ENCODE measurements at regions of chr20 and their contacts with region 1.

Region 1: GRCh38 chr20:53570521-53571357 is 22.9 kb downstream of the ZNF217 start:
- DNase-seq: no peak
- ATAC-seq: peak in 5 of 8 donors; percentile 39 to 85 (median 62)
- H3K4me3 ChIP-seq: no peak overlapping the region
- H3K27ac ChIP-seq: no peak overlapping the region
- H3K4me1 ChIP-seq: peaks cover 0 to 33% (median 6%) of the 10 kb centered on the region in 9 donors
- H3K27me3 ChIP-seq: no peaks in the 10 kb centered on the region
- CTCF ChIP-seq: no peak

Region 2: DNA sequence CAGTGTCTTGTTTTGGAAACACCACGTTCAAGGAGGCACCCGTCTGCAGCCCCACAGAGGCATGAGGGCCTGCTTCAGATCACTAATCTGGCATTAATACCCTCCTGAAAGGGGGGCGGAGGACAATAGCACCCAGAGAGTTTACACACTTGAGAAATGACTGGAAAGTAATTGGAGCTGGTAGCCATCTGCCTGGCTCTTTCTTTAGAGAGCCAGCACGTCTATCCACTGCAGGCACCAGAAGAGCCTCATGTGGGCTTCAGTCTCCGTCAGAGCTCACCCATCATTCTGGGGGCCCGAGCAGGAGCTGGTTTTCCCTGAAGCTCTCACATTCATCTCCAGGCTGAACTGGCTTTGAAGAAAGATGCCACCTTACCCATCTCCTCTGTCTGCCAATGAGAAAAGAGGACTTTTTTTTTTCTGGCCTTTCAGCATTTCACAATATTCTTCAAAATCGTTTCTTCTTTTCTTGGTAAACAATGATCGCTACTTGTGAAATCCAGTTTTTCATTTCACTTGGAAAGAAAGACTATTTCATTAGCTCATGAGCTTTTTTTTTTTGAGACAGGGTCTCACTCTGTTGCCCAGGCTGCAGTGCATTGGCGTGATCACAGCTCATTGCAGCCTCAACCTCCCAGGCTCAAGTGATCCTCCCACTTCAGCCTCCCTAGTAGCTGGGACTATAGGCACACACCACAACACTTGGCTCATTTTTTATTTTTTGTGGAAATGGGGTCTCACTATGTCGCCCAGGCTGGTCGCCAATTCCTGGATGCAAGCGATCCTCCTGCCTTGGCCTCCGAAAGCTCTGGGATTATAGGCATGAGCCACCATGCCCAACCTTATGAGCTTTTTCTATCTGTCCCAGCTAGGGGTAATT is 147.6 kb after region 1 on chr20:
- intact Hi-C with region 1: no loop called
- DNase-seq: no peak
- ATAC-seq: no peak
- H3K4me3 ChIP-seq: no peak overlapping the region
- H3K27ac ChIP-seq: peak overlapping the region in 1 of 10 donors; percentile 18
- H3K4me1 ChIP-seq: peaks cover 0 to 26% (median 0%) of the 10 kb centered on the region in 9 donors
- H3K27me3 ChIP-seq: no peaks in the 10 kb centered on the region
- CTCF ChIP-seq: no peak

Region 3: GRCh38 chr20:54062812-54063280 is 492.1 kb after region 1 on chr20:
- intact Hi-C with region 1: loop called in 8 of 10 experiments (anchors 5 to 10 kb)
- DNase-seq: no peak
- ATAC-seq: peak in 5 of 8 donors; percentile 22 to 71 (median 46)
- H3K4me3 ChIP-seq: no peak overlapping the region
- H3K27ac ChIP-seq: peak overlapping the region in 1 of 10 donors; percentile 6
- H3K4me1 ChIP-seq: peaks cover 0 to 14% (median 0%) of the 10 kb centered on the region in 9 donors
- H3K27me3 ChIP-seq: peaks cover 0 to 14% (median 7%) of the 10 kb centered on the region in 7 donors
- CTCF ChIP-seq: peak; percentile 14 to 78 (median 66)

Measured in heart right ventricle (tissue), 16 donors.